Naive thymus-derived CD4-positive, alpha-beta T cell (primary cell): ENCODE measurements at regions of chr1 and their contacts with region 1.

Region 1: GRCh38 chr1:26336477-26337205 is 17.3 kb downstream of the CRYBG2 start:
- DNase-seq: peak; percentile 55 to 79 (median 74)
- ATAC-seq: peak; percentile 96
- H3K4me3 ChIP-seq: peak overlapping the region; percentile 65
- H3K4me3 Mint-ChIP-seq: peak overlapping the region; percentile 86 to 92 (median 89)
- H3K27ac ChIP-seq: peak overlapping the region; percentile 58
- H3K27ac Mint-ChIP-seq: peak overlapping the region in 2 of 9 donors; percentile 9 to 68
- H3K4me1 ChIP-seq: peaks cover 5 to 7% of the 10 kb centered on the region in 2 donors
- H3K4me1 Mint-ChIP-seq: peaks cover 0 to 13% (median 10%) of the 10 kb centered on the region in 7 donors
- H3K27me3 ChIP-seq: no peaks in the 10 kb centered on the region
- H3K27me3 Mint-ChIP-seq: peaks cover 0 to 23% (median 0%) of the 10 kb centered on the region in 5 donors

Region 2: DNA sequence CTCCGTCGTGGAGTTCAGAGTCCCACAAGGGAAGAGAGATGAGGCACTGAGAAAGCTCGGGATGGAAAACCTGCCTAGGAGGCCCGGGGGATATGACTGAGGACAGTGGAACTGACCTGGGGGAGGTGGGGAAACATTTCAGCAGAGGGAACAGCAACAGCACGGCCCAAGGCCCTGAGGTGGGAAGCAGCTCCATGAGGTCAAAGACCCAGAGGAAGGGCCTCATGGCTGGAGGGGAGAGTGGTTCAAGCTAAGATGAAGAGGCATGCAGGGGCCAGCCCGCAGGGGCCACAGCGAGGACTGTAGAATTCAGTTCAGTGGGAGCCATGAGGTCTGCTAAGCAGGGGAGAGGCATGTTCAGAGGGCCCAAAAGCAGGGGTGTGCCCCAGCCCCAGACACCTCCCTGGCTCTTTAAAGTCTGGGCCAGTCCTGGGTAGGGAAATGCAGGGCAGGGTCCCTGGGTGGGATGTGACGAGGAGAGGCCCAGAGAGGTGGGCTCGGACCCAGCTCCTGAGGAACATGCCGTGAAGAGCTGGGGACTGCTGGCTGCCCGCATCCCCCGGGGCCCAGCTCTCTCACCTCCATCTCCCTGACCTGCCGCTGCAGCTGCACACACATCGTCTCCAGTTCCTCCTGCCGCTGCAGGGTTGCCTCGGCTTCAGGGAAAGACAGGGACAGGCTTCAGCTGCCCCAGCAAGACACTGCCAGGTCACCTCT is 40.1 kb before region 1 on chr1:
- CTCF ChIA-PET with region 1: no interaction called
- POLR2A ChIA-PET with region 1: no interaction called
- intact Hi-C with region 1: no loop called
- DNase-seq: no peak
- ATAC-seq: no peak
- H3K4me3 ChIP-seq: no peak overlapping the region
- H3K4me3 Mint-ChIP-seq: no peak overlapping the region
- H3K27ac ChIP-seq: no peak overlapping the region
- H3K27ac Mint-ChIP-seq: peak overlapping the region in 2 of 9 donors; percentile 30 to 39
- H3K4me1 ChIP-seq: peaks cover 9 to 19% of the 10 kb centered on the region in 2 donors
- H3K4me1 Mint-ChIP-seq: peaks cover 12 to 60% (median 42%) of the 10 kb centered on the region in 7 donors
- H3K27me3 ChIP-seq: no peaks in the 10 kb centered on the region
- H3K27me3 Mint-ChIP-seq: no peaks in the 10 kb centered on the region

Region 3: DNA sequence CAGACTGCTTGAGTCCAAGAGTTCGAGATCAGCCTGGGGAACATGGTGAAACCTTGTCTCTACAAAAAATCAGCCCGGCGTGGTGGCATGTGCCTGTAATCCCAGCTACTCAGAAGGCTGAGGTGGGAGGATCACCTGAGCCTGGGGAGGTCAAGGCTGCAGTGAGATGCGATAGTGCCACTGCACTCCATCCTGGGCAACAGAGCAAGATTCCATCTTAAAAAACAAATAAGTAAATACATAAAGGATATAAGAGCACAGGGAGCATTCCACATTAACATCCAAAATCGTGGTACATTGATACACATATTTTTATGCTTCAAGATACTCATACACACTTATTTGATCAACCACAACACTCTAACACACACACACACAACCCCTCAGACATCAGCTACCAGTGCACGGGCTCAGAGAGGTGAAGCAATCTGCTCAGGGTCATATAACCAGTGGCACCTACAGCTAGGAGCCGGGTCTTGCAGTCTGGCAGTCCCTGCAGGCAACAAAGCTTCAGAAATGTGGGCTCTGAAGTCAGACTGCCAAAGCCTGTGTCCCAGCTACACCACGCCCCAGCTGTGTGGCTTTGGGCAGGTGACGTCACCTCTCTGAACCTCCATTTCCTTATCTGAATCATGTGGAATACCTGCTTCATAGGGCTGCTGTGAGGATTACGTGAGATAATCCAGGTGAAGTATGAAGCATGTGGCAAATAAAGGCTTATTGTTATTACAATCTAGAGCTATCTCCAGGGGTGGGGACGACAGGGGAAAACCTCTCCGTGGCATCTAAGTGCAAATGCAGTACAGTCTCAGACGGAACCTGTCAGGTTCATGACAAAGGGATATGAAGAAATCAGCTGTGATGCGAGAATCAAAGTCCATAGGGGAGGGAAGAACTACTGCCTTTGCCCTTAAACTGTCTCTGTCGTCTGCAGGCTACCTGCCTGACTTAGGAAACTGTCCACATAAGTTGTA is 22.1 kb after region 1 on chr1:
- CTCF ChIA-PET with region 1: interaction called, 4 read pairs
- POLR2A ChIA-PET with region 1: interaction called, 3 read pairs
- intact Hi-C with region 1: loop called in 1 of 2 experiments (anchors 2 kb)
- DNase-seq: peak in 8 of 9 donors; percentile 58 to 88 (median 70)
- ATAC-seq: peak; percentile 84
- H3K4me3 ChIP-seq: peak overlapping the region; percentile 10
- H3K4me3 Mint-ChIP-seq: peak overlapping the region; percentile 43 to 83 (median 63)
- H3K27ac ChIP-seq: no peak overlapping the region
- H3K27ac Mint-ChIP-seq: peak overlapping the region in 8 of 9 donors; percentile 28 to 78 (median 46)
- H3K4me1 ChIP-seq: peaks cover 29 to 32% of the 10 kb centered on the region in 2 donors
- H3K4me1 Mint-ChIP-seq: peaks cover 25 to 47% (median 40%) of the 10 kb centered on the region in 7 donors
- H3K27me3 ChIP-seq: no peaks in the 10 kb centered on the region
- H3K27me3 Mint-ChIP-seq: peaks cover 7 to 29% (median 18%) of the 10 kb centered on the region in 5 donors

Region 4: GRCh38 chr1:26363549-26364448 is 27.2 kb after region 1 on chr1:
- CTCF ChIA-PET with region 1: interaction called, 4 read pairs
- POLR2A ChIA-PET with region 1: interaction called, 3 read pairs
- intact Hi-C with region 1: loop called in 1 of 2 experiments (anchors 1 kb)
- DNase-seq: peak; percentile 71 to 87 (median 82)
- ATAC-seq: peak; percentile 84
- H3K4me3 ChIP-seq: no peak overlapping the region
- H3K4me3 Mint-ChIP-seq: peak overlapping the region in 6 of 10 donors; percentile 39 to 72 (median 40)
- H3K27ac ChIP-seq: no peak overlapping the region
- H3K27ac Mint-ChIP-seq: peak overlapping the region in 4 of 9 donors; percentile 20 to 52 (median 40)
- H3K4me1 ChIP-seq: peaks cover 30 to 44% of the 10 kb centered on the region in 2 donors
- H3K4me1 Mint-ChIP-seq: peaks cover 28 to 53% (median 47%) of the 10 kb centered on the region in 7 donors
- H3K27me3 ChIP-seq: no peaks in the 10 kb centered on the region
- H3K27me3 Mint-ChIP-seq: peaks cover 7 to 37% (median 16%) of the 10 kb centered on the region in 5 donors